Endothelial cell of umbilical vein (primary cell): ENCODE measurements at regions of chr2 and their contacts with region 1.

Region 1: GRCh38 chr2:170873035-170873692 is 55.9 kb upstream of the GORASP2 start:
- DNase-seq: peak; percentile 79
- H3K4me3 ChIP-seq: peak overlapping the region in 1 of 3 experiments; percentile 26
- H3K27ac ChIP-seq: no peak overlapping the region
- H3K4me1 ChIP-seq: peaks cover 6% of the 10 kb centered on the region
- H3K27me3 ChIP-seq: peaks cover 0 to 2% of the 10 kb centered on the region in 2 experiments
- CTCF ChIP-seq: peak; percentile 92 to 96
- POLR2A ChIP-seq: no peak

Region 2: DNA sequence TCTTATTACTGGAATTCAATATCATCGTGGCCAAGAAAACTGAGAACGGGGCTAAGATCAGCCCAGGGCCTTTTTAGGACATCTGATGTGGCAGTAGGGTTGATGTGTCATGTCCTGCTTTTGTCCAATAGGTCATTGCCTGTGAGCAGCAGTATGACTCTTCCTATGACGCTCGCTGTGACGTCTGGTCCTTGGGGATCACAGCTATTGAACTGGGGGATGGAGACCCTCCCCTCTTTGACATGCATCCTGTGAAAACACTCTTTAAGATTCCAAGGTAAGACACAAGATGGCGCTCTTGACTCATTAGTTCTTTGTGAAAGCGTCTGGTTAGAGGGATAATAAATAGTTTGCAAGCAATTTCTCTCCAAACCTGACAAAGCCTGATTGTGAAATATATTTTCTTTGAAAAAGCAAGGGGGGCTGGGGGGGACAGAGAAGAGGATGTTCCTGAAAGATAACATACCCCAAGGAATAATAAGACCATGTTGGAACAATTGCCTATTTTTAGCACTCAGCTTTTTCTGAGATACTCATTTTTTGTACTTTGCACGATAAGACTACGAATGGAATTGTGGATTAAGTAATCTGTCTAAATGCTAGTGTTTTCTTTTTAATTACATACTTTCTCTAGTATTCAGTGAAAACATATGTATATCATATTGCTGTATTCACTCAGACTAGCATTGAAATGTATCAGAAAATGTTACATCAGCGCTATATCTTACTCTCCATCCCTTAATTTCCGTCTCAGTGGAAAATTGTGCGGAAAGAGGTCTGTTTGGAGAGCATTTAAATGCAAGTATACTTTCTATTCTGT is 637.1 kb before region 1 on chr2:
- CTCF ChIA-PET with region 1: interaction called, 12 read pairs
- POLR2A ChIA-PET with region 1: no interaction called
- dilution Hi-C with region 1: no loop called
- intact Hi-C with region 1: loop called (anchors 1 kb)
- DNase-seq: peak; percentile 72
- H3K4me3 ChIP-seq: no peak overlapping the region
- H3K27ac ChIP-seq: no peak overlapping the region
- H3K4me1 ChIP-seq: no peaks in the 10 kb centered on the region
- H3K27me3 ChIP-seq: peaks cover 11 to 27% of the 10 kb centered on the region in 2 experiments
- CTCF ChIP-seq: peak; percentile 38 to 45
- POLR2A ChIP-seq: no peak

Region 3: DNA sequence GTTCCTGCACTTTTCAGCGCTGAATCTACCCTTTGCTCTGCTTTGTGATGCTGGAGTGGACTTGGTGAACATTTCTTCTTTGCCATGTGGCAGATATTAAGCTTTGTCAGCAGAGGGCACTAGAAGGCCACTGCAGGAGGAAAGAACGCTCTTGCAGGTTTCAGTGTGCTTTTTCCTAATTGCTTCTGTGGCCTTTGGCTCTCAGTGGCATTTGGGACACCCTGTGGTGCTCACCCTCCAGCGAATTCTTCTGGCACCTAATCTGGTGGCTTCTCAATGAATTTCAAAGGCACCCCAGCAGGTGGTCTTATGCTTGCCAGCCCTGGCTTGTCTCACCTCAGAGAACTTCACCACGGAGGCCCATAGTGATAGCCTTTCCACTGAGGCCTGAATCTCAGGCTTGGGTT is 548.5 kb before region 1 on chr2:
- CTCF ChIA-PET with region 1: interaction called, 7 read pairs
- POLR2A ChIA-PET with region 1: no interaction called
- dilution Hi-C with region 1: no loop called
- intact Hi-C with region 1: loop called (anchors 2 kb)
- DNase-seq: peak; percentile 40
- H3K4me3 ChIP-seq: no peak overlapping the region
- H3K27ac ChIP-seq: no peak overlapping the region
- H3K4me1 ChIP-seq: peaks cover 1% of the 10 kb centered on the region
- H3K27me3 ChIP-seq: peaks cover 3% of the 10 kb centered on the region in 2 experiments
- CTCF ChIP-seq: peak; percentile 56 to 57
- POLR2A ChIP-seq: no peak

Region 4: GRCh38 chr2:170369894-170370293 is 503.3 kb before region 1 on chr2:
- CTCF ChIA-PET with region 1: interaction called, 16 read pairs
- POLR2A ChIA-PET with region 1: no interaction called
- dilution Hi-C with region 1: no loop called
- intact Hi-C with region 1: loop called (anchors 1 kb)
- DNase-seq: peak; percentile 42
- H3K4me3 ChIP-seq: no peak overlapping the region
- H3K27ac ChIP-seq: no peak overlapping the region
- H3K4me1 ChIP-seq: no peaks in the 10 kb centered on the region
- H3K27me3 ChIP-seq: peaks cover 45 to 58% of the 10 kb centered on the region in 2 experiments
- CTCF ChIP-seq: no peak
- POLR2A ChIP-seq: no peak

Region 5: GRCh38 chr2:170836027-170836426 is 37.1 kb before region 1 on chr2:
- CTCF ChIA-PET with region 1: interaction called, 10 read pairs
- POLR2A ChIA-PET with region 1: no interaction called
- dilution Hi-C with region 1: no loop called
- intact Hi-C with region 1: no loop called
- DNase-seq: no peak
- H3K4me3 ChIP-seq: no peak overlapping the region
- H3K27ac ChIP-seq: no peak overlapping the region
- H3K4me1 ChIP-seq: no peaks in the 10 kb centered on the region
- H3K27me3 ChIP-seq: peaks cover 14 to 34% of the 10 kb centered on the region in 2 experiments
- CTCF ChIP-seq: no peak
- POLR2A ChIP-seq: no peak

Region 6: DNA sequence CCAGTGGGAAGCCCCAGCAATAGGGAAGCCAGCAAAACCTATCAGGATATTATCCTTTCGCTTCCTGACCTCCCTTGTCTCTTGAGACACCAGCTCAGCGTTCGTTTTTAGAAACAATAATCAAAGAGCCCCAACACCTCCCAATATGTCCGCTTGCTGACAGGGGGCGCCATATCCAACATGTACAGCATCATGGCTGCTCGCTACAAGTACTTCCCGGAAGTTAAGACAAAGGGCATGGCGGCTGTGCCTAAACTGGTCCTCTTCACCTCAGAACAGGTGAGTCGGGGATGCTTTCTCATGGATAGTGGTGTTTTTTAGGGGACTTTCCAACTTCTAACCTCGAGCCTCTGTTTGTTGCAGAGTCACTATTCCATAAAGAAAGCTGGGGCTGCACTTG is 27.8 kb before region 1 on chr2:
- CTCF ChIA-PET with region 1: interaction called, 12 read pairs
- POLR2A ChIA-PET with region 1: no interaction called
- dilution Hi-C with region 1: no loop called
- intact Hi-C with region 1: no loop called
- DNase-seq: no peak
- H3K4me3 ChIP-seq: no peak overlapping the region
- H3K27ac ChIP-seq: no peak overlapping the region
- H3K4me1 ChIP-seq: peaks cover 8% of the 10 kb centered on the region
- H3K27me3 ChIP-seq: peaks cover 0 to 4% of the 10 kb centered on the region in 2 experiments
- CTCF ChIP-seq: peak in 1 of 2 donors; percentile 6
- POLR2A ChIP-seq: no peak

Region 7: GRCh38 chr2:170928824-170929685 is 55.9 kb after region 1 on chr2 and contains the start of gene GORASP2:
- CTCF ChIA-PET with region 1: interaction called, 10 read pairs
- POLR2A ChIA-PET with region 1: no interaction called
- dilution Hi-C with region 1: no loop called
- intact Hi-C with region 1: no loop called
- DNase-seq: peak; percentile 99
- H3K4me3 ChIP-seq: peak within 1 kb of the TSS; percentile 80 to 98 (median 91)
- H3K27ac ChIP-seq: peak within 1 kb of the TSS; percentile 70
- H3K4me1 ChIP-seq: peaks cover 16% of the 10 kb centered on the region
- H3K27me3 ChIP-seq: no peaks in the 10 kb centered on the region
- CTCF ChIP-seq: peak; percentile 88 to 99
- POLR2A ChIP-seq: peak; percentile 92
- total RNA-seq, gene GORASP2: 93.7 and 104 TPM in 2 replicates